PC-3 (cell line): ENCODE measurements at regions of chr1 and their contacts with region 1.

Region 1: DNA sequence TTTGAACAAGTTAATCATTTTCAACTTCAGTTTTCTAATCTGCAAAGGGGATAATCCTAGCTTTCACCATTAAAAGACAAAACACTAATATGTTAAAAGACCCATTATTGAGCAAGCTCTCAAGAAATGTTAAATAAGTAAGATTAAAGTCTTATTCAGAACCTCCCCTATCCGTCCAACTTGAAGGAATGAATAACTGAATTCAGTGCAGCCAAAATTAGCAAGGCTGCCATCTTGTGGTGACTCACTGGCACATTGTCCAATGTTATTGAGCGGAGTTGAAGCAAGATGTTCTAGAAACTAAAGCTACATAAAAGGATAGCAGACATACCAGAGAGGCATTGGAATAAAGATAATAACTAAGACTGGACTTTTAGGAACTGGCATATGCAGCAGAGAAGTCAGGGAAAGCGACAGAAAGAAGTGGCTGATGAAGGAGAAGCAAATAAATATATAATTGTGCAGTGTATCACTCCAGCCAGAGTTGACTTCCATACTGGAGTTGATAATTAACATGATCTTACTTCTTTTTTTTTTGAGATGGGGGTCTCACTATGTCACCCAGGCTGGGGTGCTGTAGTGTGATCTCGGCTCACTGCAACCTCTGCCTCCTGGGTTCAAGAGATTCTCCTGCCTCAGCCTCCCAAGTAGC is 8.2 kb upstream of the CAP1 start:
- DNase-seq: peak; percentile 71
- ATAC-seq: peak; percentile 79
- H3K4me3 ChIP-seq: no peak overlapping the region
- H3K27ac ChIP-seq: no peak overlapping the region
- H3K4me1 ChIP-seq: peaks cover 21% of the 10 kb centered on the region
- H3K27me3 ChIP-seq: no peaks in the 10 kb centered on the region
- CTCF ChIP-seq: peak; percentile 89

Region 2: GRCh38 chr1:39816415-39817090 is 215.8 kb before region 1 on chr1:
- CTCF ChIA-PET with region 1: no interaction called
- POLR2A ChIA-PET with region 1: no interaction called
- intact Hi-C with region 1: loop called (anchors 2 kb)
- DNase-seq: peak; percentile 89
- ATAC-seq: peak; percentile 76
- H3K4me3 ChIP-seq: no peak overlapping the region
- H3K27ac ChIP-seq: peak overlapping the region; percentile 70
- H3K4me1 ChIP-seq: peaks cover 44% of the 10 kb centered on the region
- H3K27me3 ChIP-seq: no peaks in the 10 kb centered on the region
- CTCF ChIP-seq: peak; percentile 75

Region 3: GRCh38 chr1:39973503-39974135 is 58.7 kb before region 1 on chr1:
- CTCF ChIA-PET with region 1: interaction called, 3 read pairs
- POLR2A ChIA-PET with region 1: no interaction called
- intact Hi-C with region 1: loop called (anchors 1 kb)
- DNase-seq: peak; percentile 78
- ATAC-seq: peak; percentile 86
- H3K4me3 ChIP-seq: peak overlapping the region; percentile 45; the same call in 1 of the 2 replicates
- H3K27ac ChIP-seq: no peak overlapping the region
- H3K4me1 ChIP-seq: no peaks in the 10 kb centered on the region
- H3K27me3 ChIP-seq: no peaks in the 10 kb centered on the region
- CTCF ChIP-seq: peak; percentile 98

Region 4: DNA sequence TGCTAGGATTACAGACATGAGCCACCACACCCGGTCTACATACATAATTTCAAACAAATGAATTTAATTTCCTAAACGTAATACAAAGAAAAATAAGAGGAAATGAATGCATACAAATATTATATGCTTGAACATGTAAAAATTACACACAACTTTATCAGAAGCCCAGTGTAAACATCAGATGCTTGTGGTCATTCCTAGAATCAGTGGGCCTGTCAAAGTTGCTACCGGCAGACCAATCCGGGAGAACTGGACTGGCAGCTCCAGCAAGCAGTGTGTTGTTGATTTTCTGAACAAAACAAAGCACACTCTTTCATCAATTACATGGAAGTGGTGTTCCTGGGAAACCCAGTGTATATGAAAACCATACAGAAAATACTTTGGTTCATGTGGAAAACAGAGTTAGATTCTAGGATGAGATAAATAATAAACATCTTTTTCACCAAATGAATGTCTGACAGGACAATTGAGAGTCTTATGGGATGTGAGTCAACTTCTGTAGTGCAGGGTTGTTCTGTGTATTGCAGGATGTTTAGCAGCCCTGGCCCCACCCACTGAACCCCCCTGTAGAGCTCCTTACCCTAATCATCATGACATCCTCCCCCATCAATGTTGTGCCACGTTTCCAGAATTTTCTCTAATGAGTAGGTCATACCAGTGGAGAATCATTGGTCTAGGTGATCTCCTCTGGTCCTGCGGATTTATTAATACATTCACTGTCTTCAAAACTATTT is 43.6 kb before region 1 on chr1:
- CTCF ChIA-PET with region 1: no interaction called
- POLR2A ChIA-PET with region 1: no interaction called
- intact Hi-C with region 1: loop called (anchors 5 kb)
- DNase-seq: peak; percentile 82
- ATAC-seq: peak; percentile 72
- H3K4me3 ChIP-seq: no peak overlapping the region
- H3K27ac ChIP-seq: peak overlapping the region; percentile 12; the same call in 1 of the 2 replicates
- H3K4me1 ChIP-seq: peaks cover 28% of the 10 kb centered on the region
- H3K27me3 ChIP-seq: no peaks in the 10 kb centered on the region
- CTCF ChIP-seq: no peak

Region 5: GRCh38 chr1:40014812-40015594 is 17.4 kb before region 1 on chr1:
- CTCF ChIA-PET with region 1: interaction called, 5 read pairs
- POLR2A ChIA-PET with region 1: no interaction called
- intact Hi-C with region 1: loop called (anchors 2 kb)
- DNase-seq: peak; percentile 97
- ATAC-seq: peak; percentile 96
- H3K4me3 ChIP-seq: no peak overlapping the region
- H3K27ac ChIP-seq: peak overlapping the region; percentile 96
- H3K4me1 ChIP-seq: peaks cover 23% of the 10 kb centered on the region
- H3K27me3 ChIP-seq: no peaks in the 10 kb centered on the region
- CTCF ChIP-seq: no peak